ENCODE measurements at regions of chr16 and their contacts with region 1.

Region 1: GRCh38 chr16:69644790-69645189 is 79.0 kb downstream of the NFAT5 start:
- DNase-seq: no peak
- H3K4me3 ChIP-seq: no peak overlapping the region
- H3K27ac ChIP-seq: no peak overlapping the region
- H3K4me1 ChIP-seq: peaks cover 0 to 3% (median 0%) of the 10 kb centered on the region in 4 donors
- H3K27me3 ChIP-seq: no peaks in the 10 kb centered on the region
- CTCF ChIP-seq: no peak
- EP300 ChIP-seq: no peak
- POLR2A ChIP-seq: no peak

Region 2: DNA sequence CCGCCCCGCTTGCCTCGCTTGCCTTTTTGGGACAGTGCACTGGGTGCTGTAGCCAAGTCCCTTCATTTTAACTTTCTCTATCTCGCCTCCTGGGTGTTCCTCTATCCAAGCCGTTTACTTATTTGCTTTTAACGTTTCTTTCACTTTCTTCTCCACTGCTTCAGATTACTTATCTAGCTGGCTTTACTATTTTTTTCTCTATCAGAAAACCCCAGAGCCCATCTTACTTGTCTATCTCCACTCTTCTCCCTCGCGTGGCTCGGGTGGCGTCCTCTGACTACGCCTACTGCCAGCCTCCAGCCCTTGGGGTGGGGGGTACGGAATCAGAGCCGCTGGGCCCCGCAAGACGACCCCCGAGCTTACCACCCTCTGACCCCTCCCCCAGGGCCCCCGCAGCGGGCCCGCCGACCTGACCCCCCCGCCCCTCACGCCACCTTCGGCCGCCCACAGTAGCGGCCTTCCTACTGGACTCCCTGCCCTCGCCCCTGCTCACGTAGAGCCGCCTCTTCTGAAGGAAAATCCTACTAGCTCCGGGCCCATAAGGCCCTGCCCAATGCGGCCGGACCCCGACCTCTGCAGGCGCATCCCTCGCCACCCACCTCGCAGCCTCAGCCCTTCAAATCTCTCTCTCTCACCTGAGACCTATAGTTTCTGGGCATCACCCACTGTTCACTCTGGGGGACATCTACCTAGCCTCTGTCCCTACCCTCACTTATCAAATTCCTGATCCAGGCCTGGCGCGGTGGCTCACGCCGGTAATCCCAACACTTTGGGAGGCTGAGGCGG is 1675.3 kb before region 1 on chr16:
- in situ Hi-C with region 1: no loop called
- intact Hi-C with region 1: loop called (anchors 5 kb)
- DNase-seq: no peak
- H3K4me3 ChIP-seq: peak overlapping the region; percentile 39 to 81 (median 62)
- H3K27ac ChIP-seq: peak overlapping the region; percentile 90 to 95 (median 94)
- H3K4me1 ChIP-seq: peaks cover 12 to 27% (median 21%) of the 10 kb centered on the region in 4 donors
- H3K27me3 ChIP-seq: peaks cover 22% of the 10 kb centered on the region
- CTCF ChIP-seq: no peak
- EP300 ChIP-seq: no peak
- POLR2A ChIP-seq: no peak

Region 3: GRCh38 chr16:69812688-69813014 is 167.9 kb after region 1 on chr16:
- in situ Hi-C with region 1: no loop called
- intact Hi-C with region 1: no loop called
- DNase-seq: no peak
- H3K4me3 ChIP-seq: no peak overlapping the region
- H3K27ac ChIP-seq: no peak overlapping the region
- H3K4me1 ChIP-seq: peaks cover 0 to 4% (median 2%) of the 10 kb centered on the region in 4 donors
- H3K27me3 ChIP-seq: no peaks in the 10 kb centered on the region
- CTCF ChIP-seq: no peak
- EP300 ChIP-seq: no peak
- POLR2A ChIP-seq: no peak